Left cardiac atrium (tissue), 4 donors: ENCODE measurements at regions of chr3 and their contacts with region 1.

Region 1: GRCh38 chr3:52056968-52057805 is 816 bp upstream of the DUSP7 start:
- DNase-seq: peak; percentile 99
- ATAC-seq: peak; percentile 90 to 92

Region 2: GRCh38 chr3:52108302-52109232 is 51.4 kb after region 1 on chr3:
- intact Hi-C with region 1: loop called in 1 of 2 experiments (anchors 5 kb)
- DNase-seq: peak; percentile 53
- ATAC-seq: peak; percentile 81 to 82

Region 3: GRCh38 chr3:52123106-52123725 is 66.0 kb after region 1 on chr3:
- intact Hi-C with region 1: loop called in 1 of 2 experiments (anchors 5 kb)
- DNase-seq: peak; percentile 77
- ATAC-seq: peak; percentile 73 to 75

Region 4: DNA sequence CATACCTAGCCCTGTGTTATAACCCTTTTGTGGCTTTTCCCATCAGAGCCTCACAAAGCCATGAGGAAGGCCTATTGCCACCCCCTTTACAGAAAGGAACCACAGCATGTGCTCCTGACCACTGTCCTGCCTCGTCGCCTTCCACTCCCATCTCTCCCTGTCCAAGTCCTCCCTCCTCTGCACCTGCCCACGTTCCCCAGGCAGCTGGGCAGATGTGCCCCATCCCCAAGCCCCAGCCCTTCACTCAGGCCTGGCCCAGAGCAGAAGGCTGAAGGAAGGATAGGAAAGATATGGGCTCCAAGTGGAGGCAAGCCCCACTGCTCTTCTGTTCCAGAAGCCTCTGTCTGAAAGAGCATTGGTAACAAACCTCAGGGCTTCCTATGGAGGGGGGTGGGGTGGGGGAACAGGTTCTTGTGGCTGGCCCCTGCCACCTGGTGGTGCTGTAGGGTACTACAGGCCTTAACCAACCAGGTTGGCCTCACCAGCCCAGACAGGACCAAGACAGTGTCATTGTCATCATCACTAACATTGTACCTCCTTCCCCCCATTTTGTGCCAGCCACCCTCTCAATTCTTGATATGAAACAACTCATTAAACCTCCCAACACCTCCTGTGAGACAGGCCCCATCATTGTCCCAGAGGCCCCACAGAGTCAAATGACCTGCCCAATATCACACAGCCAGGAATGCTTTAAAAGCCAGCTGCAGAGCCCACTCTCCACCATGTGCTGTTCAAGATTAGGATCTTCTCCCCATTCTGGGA is 87.0 kb after region 1 on chr3:
- intact Hi-C with region 1: loop called in 1 of 2 experiments (anchors 2 kb)
- DNase-seq: peak; percentile 90
- ATAC-seq: peak; percentile 77 to 84